ENCODE measurements at regions of chr6 and their contacts with region 1.

Region 1: DNA sequence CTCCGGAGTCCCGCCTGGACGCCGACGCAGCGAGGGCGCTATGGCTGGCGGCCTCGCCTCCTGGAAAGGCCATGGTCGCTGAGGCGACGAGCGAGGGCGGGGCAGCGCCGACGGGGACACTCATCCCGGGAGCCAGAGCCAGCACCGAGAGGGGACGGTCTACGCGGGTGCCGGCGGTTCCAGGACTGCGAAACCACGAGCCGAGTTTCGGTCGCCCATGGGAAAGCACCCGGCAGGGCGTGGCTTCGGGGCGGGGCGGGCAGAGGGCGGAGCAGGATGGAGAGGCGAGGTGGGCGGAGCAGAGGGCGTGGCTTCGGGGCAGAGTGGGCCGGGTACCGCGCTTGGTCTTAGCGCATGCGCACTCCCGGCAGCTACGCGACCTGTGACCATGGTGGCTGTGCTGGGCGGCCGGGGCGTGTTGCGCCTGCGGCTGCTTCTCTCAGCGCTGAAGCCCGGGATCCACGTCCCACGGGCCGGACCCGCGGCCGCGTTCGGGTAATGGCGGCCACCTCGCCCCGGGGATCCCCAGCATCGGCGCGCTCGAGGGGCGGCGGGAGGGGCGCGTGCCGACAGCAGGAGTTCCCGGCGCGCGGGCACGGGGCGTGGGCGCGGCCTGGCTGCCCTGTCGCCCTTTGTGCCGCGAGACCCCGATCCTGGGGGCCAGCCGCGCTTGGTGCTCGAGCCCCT is at the start of gene BPHL:
- DNase-seq: peak; percentile 92
- H3K4me3 Mint-ChIP-seq: peak within 1 kb of the TSS; percentile 80
- H3K27ac Mint-ChIP-seq: peak within 1 kb of the TSS; percentile 98
- H3K4me1 Mint-ChIP-seq: peaks cover 14% of the 10 kb centered on the region
- H3K27me3 Mint-ChIP-seq: no peaks in the 10 kb centered on the region
- CTCF ChIP-seq: no peak
- total RNA-seq, gene BPHL: 13.2 and 17.5 TPM in 2 replicates

Region 2: GRCh38 chr6:3068329-3069214 is 49.9 kb before region 1 on chr6 and contains the start of gene RIPK1:
- CTCF ChIA-PET with region 1: interaction called, 4 read pairs
- POLR2A ChIA-PET with region 1: interaction called, 9 read pairs
- intact Hi-C with region 1: loop called (anchors 1 kb)
- DNase-seq: peak; percentile 88
- H3K4me3 Mint-ChIP-seq: peak within 1 kb of the TSS; percentile 93
- H3K27ac Mint-ChIP-seq: peak within 1 kb of the TSS; percentile 93
- H3K4me1 Mint-ChIP-seq: peaks cover 12% of the 10 kb centered on the region
- H3K27me3 Mint-ChIP-seq: no peaks in the 10 kb centered on the region
- CTCF ChIP-seq: no peak
- total RNA-seq, gene RIPK1: 16.8 and 21.2 TPM in 2 replicates